ENCODE measurements at regions of chr20 and their contacts with region 1.

Region 1: DNA sequence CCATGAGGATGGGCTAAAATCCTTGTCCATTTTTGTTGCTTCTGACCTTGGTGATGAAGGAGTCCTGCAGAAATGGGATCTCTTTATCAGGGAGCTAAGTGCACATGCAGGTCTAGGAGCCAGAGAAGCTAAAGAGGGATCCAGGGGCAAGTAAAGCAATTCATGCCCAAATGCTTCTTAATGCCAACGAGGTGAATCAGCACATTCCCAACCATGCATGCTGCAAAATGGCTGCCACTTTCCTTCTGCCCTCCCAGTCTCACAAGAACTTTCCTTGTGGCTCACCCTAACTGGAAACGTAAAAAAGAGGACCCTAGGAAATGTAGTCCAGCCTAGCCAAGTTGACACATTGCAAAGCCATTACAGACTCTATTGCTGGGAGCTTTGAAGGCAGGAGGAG is 298.4 kb downstream of the MAFB start:
- DNase-seq: no peak
- ATAC-seq: no peak
- H3K4me3 ChIP-seq: no peak overlapping the region
- H3K27ac ChIP-seq: no peak overlapping the region
- H3K4me1 ChIP-seq: no peaks in the 10 kb centered on the region
- H3K27me3 ChIP-seq: no peaks in the 10 kb centered on the region
- CTCF ChIP-seq: no peak
- POLR2A ChIP-seq: no peak

Region 2: GRCh38 chr20:40431112-40432010 is 40.7 kb after region 1 on chr20:
- in situ Hi-C with region 1: no loop called
- intact Hi-C with region 1: no loop called
- DNase-seq: no peak
- ATAC-seq: no peak
- H3K4me3 ChIP-seq: no peak overlapping the region
- H3K27ac ChIP-seq: no peak overlapping the region
- H3K4me1 ChIP-seq: no peaks in the 10 kb centered on the region
- H3K27me3 ChIP-seq: no peaks in the 10 kb centered on the region
- CTCF ChIP-seq: no peak
- POLR2A ChIP-seq: no peak

Region 3: DNA sequence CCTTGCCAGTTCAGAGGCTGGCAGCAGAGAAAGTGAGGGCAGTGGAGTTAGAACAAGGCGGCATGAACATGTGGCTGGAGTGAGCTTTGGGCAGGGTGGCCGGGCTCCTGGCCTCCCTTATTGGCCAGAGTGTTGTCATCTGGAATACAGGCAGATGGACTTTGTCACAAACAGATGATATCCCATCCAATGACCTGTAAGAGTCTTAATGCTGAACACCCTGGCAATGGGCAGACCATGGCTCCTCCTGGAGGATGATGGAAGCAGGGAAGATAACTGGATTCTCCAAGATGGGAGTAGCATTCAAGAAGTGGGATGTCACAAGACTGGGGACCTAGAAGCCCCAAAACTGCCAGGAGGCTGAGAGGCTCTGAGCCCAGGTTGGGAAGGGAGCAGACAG is 56.2 kb after region 1 on chr20:
- in situ Hi-C with region 1: no loop called
- intact Hi-C with region 1: no loop called
- DNase-seq: no peak
- ATAC-seq: no peak
- H3K4me3 ChIP-seq: no peak overlapping the region
- H3K27ac ChIP-seq: no peak overlapping the region
- H3K4me1 ChIP-seq: peaks cover 14 to 17% of the 10 kb centered on the region in 2 donors
- H3K27me3 ChIP-seq: no peaks in the 10 kb centered on the region
- CTCF ChIP-seq: no peak
- POLR2A ChIP-seq: no peak

Region 4: DNA sequence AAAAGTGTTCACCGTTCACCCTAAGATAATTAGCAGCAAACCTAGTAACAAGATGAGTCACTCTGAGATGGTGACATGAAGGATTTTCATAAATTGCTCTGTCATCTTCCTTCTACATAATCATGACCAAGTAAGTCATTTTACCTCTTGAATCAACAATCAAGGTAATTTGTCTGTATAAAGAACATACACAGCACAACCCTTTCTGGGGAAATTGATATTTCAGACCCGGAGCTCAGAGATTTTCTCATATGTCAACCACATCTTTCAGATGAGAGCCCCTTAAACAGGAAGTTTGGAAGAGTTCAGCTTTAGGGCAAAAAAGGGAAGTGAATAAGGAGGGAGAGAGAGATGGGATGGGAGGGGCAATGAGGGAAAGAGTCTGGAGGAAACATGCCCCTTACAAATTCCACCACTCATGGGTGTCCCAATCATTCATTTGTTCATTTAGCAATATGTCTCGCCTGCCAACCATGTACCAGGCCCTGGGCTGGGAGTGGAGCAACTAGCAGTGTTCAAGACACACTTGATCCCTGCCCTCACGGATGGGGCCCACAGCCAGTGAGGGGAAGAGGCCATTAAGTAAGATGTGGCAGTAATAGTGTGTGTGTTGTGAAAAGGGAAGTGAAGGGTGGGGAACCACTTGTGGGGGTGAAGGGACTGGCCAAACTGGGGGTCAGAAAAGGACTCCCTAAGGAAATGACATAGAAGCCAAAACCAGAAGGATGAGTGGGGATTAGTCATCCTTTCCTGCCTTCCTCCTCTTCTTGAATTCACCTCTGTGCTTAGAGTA is 107.4 kb after region 1 on chr20:
- in situ Hi-C with region 1: loop called in 1 of 4 experiments (anchors 25 kb)
- intact Hi-C with region 1: no loop called
- DNase-seq: peak; percentile 15 to 49
- ATAC-seq: peak; percentile 19 to 33
- H3K4me3 ChIP-seq: no peak overlapping the region
- H3K27ac ChIP-seq: no peak overlapping the region
- H3K4me1 ChIP-seq: no peaks in the 10 kb centered on the region
- H3K27me3 ChIP-seq: no peaks in the 10 kb centered on the region
- CTCF ChIP-seq: no peak
- POLR2A ChIP-seq: no peak

Measured in gastrocnemius medialis (tissue), 4 donors.